ENCODE measurements at regions of chr13 and their contacts with region 1.

Region 1: DNA sequence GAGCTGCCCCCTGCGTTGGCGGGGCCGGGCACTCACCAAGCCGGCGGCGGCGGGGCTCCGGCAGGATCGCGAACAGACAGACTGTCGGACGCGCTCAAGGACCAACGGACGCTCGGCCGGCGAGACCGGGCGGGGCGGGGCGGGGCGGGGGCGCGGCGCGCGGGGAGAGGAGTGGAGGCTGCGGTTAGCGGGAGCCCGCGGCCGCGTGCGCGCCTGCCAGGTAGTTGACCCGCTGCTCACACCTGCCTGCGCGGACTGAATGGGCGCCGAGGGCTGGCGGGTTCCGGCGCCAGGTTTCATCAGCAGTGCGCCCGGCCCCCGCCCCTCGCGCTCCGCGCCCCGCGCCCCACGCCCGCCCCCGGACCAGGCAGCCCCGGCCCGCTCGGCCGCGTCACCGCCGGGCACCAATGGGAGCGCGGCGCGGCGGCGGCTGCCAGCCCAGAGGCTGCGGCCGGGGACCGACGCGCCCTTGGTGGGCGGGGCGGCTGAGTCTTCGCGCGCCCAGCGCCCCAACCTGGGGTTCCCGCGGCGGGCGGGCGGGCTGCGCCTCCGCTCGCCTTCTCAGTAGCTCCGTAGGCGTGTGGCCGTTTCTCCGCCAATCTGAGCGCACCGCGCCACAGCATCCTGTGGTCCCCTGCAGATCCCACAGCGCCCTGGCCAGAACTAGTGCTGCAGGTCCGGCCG is at the start of gene SLC7A1:
- DNase-seq: peak; percentile 30 to 89
- H3K4me3 ChIP-seq: peak within 1 kb of the TSS; percentile 93
- H3K27ac ChIP-seq: peak within 1 kb of the TSS; percentile 93
- H3K4me1 ChIP-seq: peaks cover 0 to 2% of the 10 kb centered on the region in 2 donors
- H3K27me3 ChIP-seq: no peaks in the 10 kb centered on the region
- CTCF ChIP-seq: no peak
- total RNA-seq, gene SLC7A1: 17.2 TPM

Region 2: GRCh38 chr13:27620377-27621115 is 1975.0 kb before region 1 on chr13 and contains the start of gene LNX2:
- intact Hi-C with region 1: loop called (anchors 10 kb)
- DNase-seq: peak; percentile 95 to 99
- H3K4me3 ChIP-seq: peak within 1 kb of the TSS; percentile 72 to 95
- H3K27ac ChIP-seq: peak within 1 kb of the TSS; percentile 95 to 97
- H3K4me1 ChIP-seq: peaks cover 0 to 14% of the 10 kb centered on the region in 2 donors
- H3K27me3 ChIP-seq: no peaks in the 10 kb centered on the region
- CTCF ChIP-seq: no peak
- total RNA-seq, gene LNX2: 3.7 TPM

Region 3: DNA sequence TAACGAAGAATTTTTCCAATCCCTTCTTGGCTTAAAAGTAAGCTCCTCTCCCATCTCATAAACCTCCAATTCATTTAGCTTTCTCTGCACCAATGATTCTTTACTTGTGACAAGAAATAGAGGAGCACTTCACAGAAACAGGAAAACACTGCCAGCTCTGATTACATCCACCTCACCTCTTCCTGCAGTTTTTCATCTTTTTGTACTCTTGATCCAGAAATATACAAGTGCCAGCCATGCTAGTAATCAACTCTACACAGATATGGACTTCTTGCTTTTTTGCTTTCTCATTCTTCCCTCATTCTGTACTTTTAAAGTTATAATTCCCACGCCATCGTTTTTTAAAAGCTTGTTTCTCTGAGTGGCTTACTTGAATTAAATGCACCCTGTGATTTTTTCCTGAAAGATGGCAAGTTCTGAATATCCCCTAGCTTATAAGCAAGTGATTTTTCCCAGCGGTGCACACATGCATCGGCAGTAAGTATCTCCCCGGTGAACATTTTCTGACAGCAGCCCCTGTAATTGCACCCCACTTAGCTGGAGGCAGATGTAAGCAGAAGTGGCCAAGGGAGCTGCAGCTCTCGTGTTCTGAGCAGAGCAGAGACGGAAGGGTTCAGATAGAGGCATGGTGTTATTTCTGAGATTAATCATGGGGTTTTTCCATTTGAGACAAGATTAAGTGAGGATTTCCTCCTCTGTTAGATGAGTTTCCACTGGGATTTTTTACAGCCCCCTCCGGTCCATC is 340.7 kb before region 1 on chr13:
- intact Hi-C with region 1: no loop called
- DNase-seq: no peak
- H3K4me3 ChIP-seq: no peak overlapping the region
- H3K27ac ChIP-seq: no peak overlapping the region
- H3K4me1 ChIP-seq: peaks cover 0 to 5% of the 10 kb centered on the region in 2 donors
- H3K27me3 ChIP-seq: no peaks in the 10 kb centered on the region
- CTCF ChIP-seq: no peak

Region 4: DNA sequence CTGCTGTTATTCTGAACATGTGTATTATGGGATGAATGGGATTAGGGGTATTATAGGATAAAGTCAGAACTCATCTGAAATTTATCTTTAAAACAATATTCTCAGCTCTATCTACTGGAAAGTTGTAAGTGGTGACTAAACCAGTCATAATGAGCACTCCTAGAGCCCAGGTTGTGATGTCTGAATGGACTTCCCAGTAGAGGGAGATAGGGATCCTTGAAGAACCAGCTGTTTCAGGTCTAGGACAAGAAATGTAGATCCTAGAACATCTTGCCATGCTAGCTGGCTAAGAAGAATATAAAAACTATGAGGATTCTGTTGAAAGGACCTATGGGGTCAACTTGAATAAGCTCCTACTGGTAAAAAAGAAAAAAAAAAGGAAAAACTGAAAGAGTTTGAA is 310.8 kb before region 1 on chr13:
- intact Hi-C with region 1: no loop called
- DNase-seq: no peak
- H3K4me3 ChIP-seq: no peak overlapping the region
- H3K27ac ChIP-seq: no peak overlapping the region
- H3K4me1 ChIP-seq: no peaks in the 10 kb centered on the region
- H3K27me3 ChIP-seq: no peaks in the 10 kb centered on the region
- CTCF ChIP-seq: no peak

Region 5: DNA sequence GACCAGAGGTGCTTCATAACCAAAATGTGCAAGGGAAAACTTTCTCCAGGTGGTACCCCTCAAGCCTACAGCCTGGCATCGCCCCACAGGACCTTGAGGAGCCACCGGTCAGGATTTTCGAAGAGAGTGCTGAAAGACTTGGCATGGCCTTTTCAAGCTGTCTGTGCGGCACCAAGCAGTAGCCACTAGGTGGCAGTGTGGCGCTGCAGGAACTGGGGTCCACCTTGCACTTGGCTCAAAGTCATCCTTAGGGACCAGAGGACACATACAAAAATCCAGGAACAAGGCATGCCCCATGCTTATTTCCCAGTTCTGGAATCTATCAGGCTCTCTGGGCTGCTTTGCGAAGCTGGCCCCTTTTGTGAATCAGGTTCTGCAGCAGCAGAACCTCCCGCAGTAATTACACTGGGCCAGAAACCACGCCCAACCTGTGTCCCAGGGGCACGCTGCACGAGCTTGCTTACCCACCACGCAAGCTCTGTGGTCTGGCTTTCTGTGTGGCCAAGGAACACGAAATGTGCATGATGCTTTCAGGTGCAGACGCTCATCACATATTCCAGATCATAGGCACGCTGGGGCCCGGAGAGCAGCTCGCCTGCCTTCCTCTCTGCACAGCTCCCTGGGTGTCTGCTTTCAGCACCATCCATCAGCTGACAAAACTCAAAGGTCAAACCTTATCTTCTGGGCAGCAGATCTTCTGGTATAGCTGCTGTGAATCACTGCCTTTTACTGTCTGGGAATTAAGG is 87.2 kb before region 1 on chr13:
- intact Hi-C with region 1: loop called (anchors 2 kb)
- DNase-seq: peak in 1 of 2 donors; percentile 89
- H3K4me3 ChIP-seq: peak overlapping the region in 1 of 2 donors; percentile 16
- H3K27ac ChIP-seq: no peak overlapping the region
- H3K4me1 ChIP-seq: peaks cover 0 to 3% of the 10 kb centered on the region in 2 donors
- H3K27me3 ChIP-seq: no peaks in the 10 kb centered on the region
- CTCF ChIP-seq: peak; percentile 83 to 99 (median 95)

Region 6: GRCh38 chr13:29850224-29850898 is 254.8 kb after region 1 on chr13 and contains the start of gene UBL3:
- intact Hi-C with region 1: loop called (anchors 1 kb)
- DNase-seq: peak; percentile 91 to 98
- H3K4me3 ChIP-seq: peak within 1 kb of the TSS; percentile 76 to 95
- H3K27ac ChIP-seq: peak within 1 kb of the TSS; percentile 97 to 98
- H3K4me1 ChIP-seq: peaks cover 0 to 11% of the 10 kb centered on the region in 2 donors
- H3K27me3 ChIP-seq: no peaks in the 10 kb centered on the region
- CTCF ChIP-seq: no peak
- total RNA-seq, gene UBL3: 17.9 TPM

Region 7: DNA sequence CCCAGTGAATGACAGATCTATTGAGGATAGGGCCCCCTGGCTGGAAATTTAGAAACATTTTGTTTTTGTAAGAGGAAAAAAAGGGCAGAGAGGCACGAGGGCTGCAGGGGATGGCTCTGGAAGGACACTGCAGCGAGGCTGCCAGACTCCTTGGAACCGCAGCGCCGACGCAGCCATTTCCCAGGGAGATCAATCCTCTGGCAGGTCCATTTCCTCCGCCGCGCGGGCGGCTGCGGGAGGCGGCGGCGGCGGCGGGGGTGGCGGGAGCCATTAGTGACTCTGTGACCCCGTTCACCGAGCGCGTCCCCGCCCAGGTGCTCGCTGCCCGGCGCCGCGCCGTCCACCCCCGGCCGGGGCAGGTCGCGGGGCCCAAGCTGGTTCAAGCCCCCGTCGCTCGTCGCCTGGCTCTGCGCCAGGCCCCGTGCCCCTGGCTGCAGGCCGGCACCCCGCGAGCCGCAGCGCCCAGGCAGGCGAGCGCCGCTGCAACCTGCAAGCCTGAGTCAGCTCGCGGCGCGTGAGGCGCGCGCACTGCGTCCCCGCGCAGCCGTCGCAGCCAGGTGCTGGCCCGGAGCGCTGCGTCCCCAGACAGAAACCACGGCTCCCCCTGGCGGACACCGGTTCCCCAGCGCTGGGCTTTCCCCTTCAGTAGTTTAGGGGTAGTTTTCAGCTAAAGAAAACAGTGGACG is 519.2 kb after region 1 on chr13:
- intact Hi-C with region 1: loop called (anchors 2 kb)
- DNase-seq: peak; percentile 56 to 95
- H3K4me3 ChIP-seq: peak overlapping the region; percentile 75 to 76
- H3K27ac ChIP-seq: peak overlapping the region; percentile 54 to 60
- H3K4me1 ChIP-seq: peaks cover 0 to 10% of the 10 kb centered on the region in 2 donors
- H3K27me3 ChIP-seq: no peaks in the 10 kb centered on the region
- CTCF ChIP-seq: peak; percentile 84 to 95 (median 88)

Region 8: DNA sequence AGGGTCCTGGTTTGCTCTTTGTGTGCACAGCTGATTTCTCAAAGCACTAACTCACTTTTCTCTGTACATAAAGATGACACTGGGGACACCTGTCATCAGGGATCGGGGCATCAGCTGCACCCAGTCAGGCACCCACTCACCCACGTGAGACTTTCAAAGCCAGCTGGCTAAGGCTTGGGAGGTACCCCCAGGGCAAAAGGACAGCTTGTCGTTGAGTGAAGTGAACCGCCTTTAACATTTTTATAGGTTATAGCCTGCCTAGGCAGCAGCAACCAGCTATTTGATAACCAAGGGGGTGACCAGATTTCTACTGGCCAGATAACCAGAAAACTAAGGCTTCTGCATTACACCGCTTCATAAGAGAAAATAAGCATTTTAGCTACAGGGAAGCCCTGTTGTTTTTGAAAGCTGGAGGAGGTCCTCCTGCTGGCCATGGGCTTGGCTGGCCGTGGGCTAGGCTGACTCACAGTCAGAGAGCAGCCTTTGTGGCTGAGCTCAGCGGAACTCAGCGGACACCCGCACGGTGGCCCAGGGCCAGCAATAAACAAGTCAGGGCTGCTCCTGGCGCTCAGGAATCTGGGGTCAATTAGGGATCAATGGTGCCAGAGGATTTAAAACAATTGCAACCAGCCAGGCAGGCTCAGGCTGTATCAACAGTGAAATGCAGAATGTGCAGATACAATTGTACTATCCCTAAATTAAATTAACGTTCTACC is 1196.9 kb after region 1 on chr13:
- intact Hi-C with region 1: loop called (anchors 10 kb)
- DNase-seq: peak; percentile 19 to 87
- H3K4me3 ChIP-seq: no peak overlapping the region
- H3K27ac ChIP-seq: peak overlapping the region in 1 of 2 donors; percentile 28
- H3K4me1 ChIP-seq: peaks cover 0 to 17% of the 10 kb centered on the region in 2 donors
- H3K27me3 ChIP-seq: no peaks in the 10 kb centered on the region
- CTCF ChIP-seq: peak in 2 of 3 experiments; percentile 33 to 46